ENCODE measurements at regions of chr16 and their contacts with region 1.

Region 1: DNA sequence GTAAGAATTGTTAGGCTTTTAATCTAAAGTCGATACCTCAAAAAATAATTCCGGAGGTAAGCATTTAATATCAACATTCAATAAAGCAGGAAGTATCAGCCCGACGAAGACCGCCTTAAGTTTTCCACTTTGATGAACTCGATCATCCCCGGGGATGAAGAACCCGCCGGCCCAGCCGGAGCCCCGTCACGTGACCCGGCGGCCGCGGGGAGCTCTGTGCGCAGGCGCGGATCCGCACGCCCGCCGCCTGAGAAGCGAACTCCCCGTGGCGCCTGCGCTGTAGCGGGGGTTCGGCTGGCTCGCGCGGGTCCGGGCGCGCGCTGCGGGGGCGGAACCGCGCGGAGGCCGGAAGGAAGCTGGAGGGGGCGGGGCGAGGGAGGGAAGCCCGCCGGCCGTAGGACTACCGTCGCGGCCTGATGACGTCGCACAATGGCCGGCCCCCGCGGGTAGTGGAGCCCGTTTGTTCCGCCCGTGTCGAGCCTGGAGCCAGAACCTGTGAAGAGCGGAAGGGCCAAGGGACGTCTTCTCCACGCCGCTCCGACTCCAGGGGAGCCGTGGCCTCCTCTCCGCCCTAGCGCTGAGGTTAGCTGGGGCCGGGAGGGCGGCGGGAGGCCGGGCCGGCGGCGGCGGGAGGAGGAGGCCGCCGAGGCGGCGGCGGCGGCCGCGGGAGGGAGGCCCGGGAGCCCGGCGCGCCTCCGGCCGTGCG is at the start of gene ZC3H18:
- DNase-seq: peak; percentile 98
- H3K4me3 ChIP-seq: peak within 1 kb of the TSS; percentile 71 to 93 (median 78)
- H3K27ac ChIP-seq: peak within 1 kb of the TSS; percentile 83 to 90 (median 86)
- H3K4me1 ChIP-seq: peaks cover 0 to 29% (median 19%) of the 10 kb centered on the region in 4 donors
- H3K27me3 ChIP-seq: no peaks in the 10 kb centered on the region
- CTCF ChIP-seq: no peak
- EP300 ChIP-seq: no peak
- POLR2A ChIP-seq: peak in 1 of 2 donors; percentile 21
- total RNA-seq, gene ZC3H18: 15.5 to 22.1 (median 16.6) TPM

Region 2: GRCh38 chr16:87765776-87766484 is 804.2 kb before region 1 on chr16 and contains the start of gene KLHDC4:
- intact Hi-C with region 1: loop called (anchors 10 kb)
- DNase-seq: peak; percentile 94
- H3K4me3 ChIP-seq: peak within 1 kb of the TSS; percentile 80 to 84 (median 80)
- H3K27ac ChIP-seq: peak within 1 kb of the TSS; percentile 80 to 89 (median 83)
- H3K4me1 ChIP-seq: peaks cover 0 to 21% (median 16%) of the 10 kb centered on the region in 4 donors
- H3K27me3 ChIP-seq: no peaks in the 10 kb centered on the region
- CTCF ChIP-seq: no peak
- EP300 ChIP-seq: no peak
- POLR2A ChIP-seq: peak; percentile 72 to 79
- total RNA-seq, gene KLHDC4: 24.6 to 28.5 (median 25.5) TPM

Region 3: DNA sequence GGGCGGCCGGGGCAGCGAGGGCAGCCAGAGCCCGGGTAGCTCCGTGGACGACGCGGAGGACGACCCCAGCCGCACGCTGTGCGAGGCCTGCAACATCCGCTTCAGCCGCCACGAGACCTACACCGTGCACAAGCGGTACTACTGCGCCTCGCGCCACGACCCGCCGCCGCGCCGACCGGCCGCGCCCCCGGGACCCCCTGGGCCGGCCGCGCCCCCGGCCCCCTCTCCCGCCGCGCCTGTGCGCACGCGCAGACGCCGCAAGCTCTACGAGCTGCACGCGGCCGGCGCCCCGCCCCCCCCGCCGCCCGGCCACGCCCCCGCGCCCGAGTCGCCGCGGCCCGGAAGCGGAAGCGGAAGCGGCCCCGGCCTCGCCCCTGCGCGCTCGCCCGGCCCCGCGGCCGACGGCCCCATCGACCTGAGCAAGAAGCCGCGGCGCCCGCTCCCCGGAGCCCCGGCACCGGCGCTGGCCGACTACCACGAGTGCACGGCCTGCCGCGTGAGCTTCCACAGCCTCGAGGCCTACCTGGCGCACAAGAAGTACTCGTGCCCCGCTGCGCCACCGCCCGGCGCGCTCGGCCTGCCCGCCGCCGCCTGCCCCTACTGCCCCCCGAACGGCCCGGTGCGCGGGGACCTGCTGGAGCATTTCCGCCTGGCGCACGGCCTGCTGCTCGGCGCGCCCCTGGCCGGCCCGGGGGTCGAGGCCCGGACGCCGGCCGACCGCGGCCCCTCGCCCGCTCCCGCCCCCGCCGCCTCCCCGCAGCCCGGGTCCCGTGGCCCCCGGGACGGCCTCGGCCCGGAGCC is 36.0 kb before region 1 on chr16:
- intact Hi-C with region 1: loop called (anchors 2 kb)
- DNase-seq: peak; percentile 86
- H3K4me3 ChIP-seq: peak overlapping the region; percentile 56 to 81 (median 80)
- H3K27ac ChIP-seq: peak overlapping the region; percentile 76 to 93 (median 88)
- H3K4me1 ChIP-seq: peaks cover 0 to 28% (median 24%) of the 10 kb centered on the region in 4 donors
- H3K27me3 ChIP-seq: peaks cover 0 to 8% (median 1%) of the 10 kb centered on the region in 3 donors
- CTCF ChIP-seq: no peak
- EP300 ChIP-seq: no peak
- POLR2A ChIP-seq: no peak

Region 4: GRCh38 chr16:88662843-88663606 is 92.9 kb after region 1 on chr16 and contains the start of gene MVD:
- intact Hi-C with region 1: loop called (anchors 1 kb)
- DNase-seq: peak; percentile 99
- H3K4me3 ChIP-seq: peak within 1 kb of the TSS; percentile 79 to 99 (median 85)
- H3K27ac ChIP-seq: peak within 1 kb of the TSS; percentile 85 to 92 (median 88)
- H3K4me1 ChIP-seq: peaks cover 0 to 22% (median 14%) of the 10 kb centered on the region in 4 donors
- H3K27me3 ChIP-seq: no peaks in the 10 kb centered on the region
- CTCF ChIP-seq: no peak
- EP300 ChIP-seq: no peak
- POLR2A ChIP-seq: peak; percentile 43 to 86
- total RNA-seq, gene MVD: 16.8 to 25.7 (median 23.2) TPM

Measured in sigmoid colon (tissue), 7 donors.